ENCODE measurements at regions of chr4 and their contacts with region 1.

Region 1: GRCh38 chr4:85474818-85475630 is at the start of gene ARHGAP24:
- DNase-seq: peak; percentile 79
- ATAC-seq: peak; percentile 89
- H3K4me3 Mint-ChIP-seq: peak within 1 kb of the TSS; percentile 99
- H3K27ac Mint-ChIP-seq: peak within 1 kb of the TSS; percentile 99
- H3K4me1 Mint-ChIP-seq: peaks cover 52% of the 10 kb centered on the region
- H3K27me3 Mint-ChIP-seq: no peaks in the 10 kb centered on the region
- CTCF ChIP-seq: no peak
- total RNA-seq, gene ARHGAP24: 155 and 231 TPM in 2 replicates

Region 2: GRCh38 chr4:85391589-85392410 is 83.2 kb before region 1 on chr4:
- CTCF ChIA-PET with region 1: no interaction called
- POLR2A ChIA-PET with region 1: interaction called, 19 read pairs
- intact Hi-C with region 1: loop called (anchors 2 kb)
- DNase-seq: no peak
- ATAC-seq: peak; percentile 63
- H3K4me3 Mint-ChIP-seq: peak overlapping the region; percentile 61
- H3K27ac Mint-ChIP-seq: peak overlapping the region; percentile 84
- H3K4me1 Mint-ChIP-seq: peaks cover 35% of the 10 kb centered on the region
- H3K27me3 Mint-ChIP-seq: no peaks in the 10 kb centered on the region
- CTCF ChIP-seq: no peak

Region 3: GRCh38 chr4:85489273-85490265 is 14.5 kb after region 1 on chr4:
- CTCF ChIA-PET with region 1: interaction called, 6 read pairs
- POLR2A ChIA-PET with region 1: interaction called, 15 read pairs
- intact Hi-C with region 1: loop called (anchors 1 kb)
- DNase-seq: no peak
- ATAC-seq: no peak
- H3K4me3 Mint-ChIP-seq: no peak overlapping the region
- H3K27ac Mint-ChIP-seq: peak overlapping the region; percentile 13
- H3K4me1 Mint-ChIP-seq: peaks cover 55% of the 10 kb centered on the region
- H3K27me3 Mint-ChIP-seq: no peaks in the 10 kb centered on the region
- CTCF ChIP-seq: no peak

Region 4: DNA sequence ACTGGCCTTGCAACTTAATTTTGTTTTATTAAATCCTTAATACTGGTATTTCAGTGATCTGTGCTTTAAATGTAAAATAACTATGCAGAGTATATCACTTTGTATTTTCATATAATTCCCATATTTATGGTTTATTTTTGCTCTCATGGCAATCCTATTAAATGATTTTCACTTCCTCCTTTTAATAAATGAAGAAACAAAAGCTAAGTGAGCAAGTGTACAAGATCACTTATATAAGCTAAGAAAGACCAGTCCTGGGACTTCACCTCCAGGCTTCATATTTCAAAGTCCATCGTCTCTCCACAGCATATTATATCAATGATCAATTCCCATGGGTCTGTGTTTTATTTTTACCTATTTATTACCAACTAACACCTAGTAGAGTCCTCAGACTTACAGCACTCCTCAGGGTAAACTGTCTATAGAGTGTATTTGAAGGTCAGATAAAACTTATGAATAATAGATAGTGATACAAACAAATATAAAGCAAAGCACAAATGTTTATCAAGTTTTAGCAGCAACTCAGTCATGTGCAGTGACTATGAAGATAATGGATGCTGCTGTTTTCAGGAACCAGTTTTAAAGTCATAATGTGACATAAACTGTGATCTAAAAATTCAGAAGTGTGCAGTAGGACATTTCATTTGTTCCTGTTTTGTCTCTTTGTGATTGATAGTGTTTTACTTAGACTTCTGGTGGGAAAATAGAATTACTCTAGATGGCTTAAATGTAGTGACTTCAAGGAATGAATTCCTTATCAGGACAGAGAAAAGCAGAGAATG is 56.7 kb after region 1 on chr4:
- CTCF ChIA-PET with region 1: interaction called, 3 read pairs
- POLR2A ChIA-PET with region 1: interaction called, 4 read pairs
- intact Hi-C with region 1: loop called (anchors 2 kb)
- DNase-seq: no peak
- ATAC-seq: peak; percentile 52
- H3K4me3 Mint-ChIP-seq: peak overlapping the region; percentile 5
- H3K27ac Mint-ChIP-seq: peak overlapping the region; percentile 3
- H3K4me1 Mint-ChIP-seq: peaks cover 49% of the 10 kb centered on the region
- H3K27me3 Mint-ChIP-seq: no peaks in the 10 kb centered on the region
- CTCF ChIP-seq: no peak

Region 5: DNA sequence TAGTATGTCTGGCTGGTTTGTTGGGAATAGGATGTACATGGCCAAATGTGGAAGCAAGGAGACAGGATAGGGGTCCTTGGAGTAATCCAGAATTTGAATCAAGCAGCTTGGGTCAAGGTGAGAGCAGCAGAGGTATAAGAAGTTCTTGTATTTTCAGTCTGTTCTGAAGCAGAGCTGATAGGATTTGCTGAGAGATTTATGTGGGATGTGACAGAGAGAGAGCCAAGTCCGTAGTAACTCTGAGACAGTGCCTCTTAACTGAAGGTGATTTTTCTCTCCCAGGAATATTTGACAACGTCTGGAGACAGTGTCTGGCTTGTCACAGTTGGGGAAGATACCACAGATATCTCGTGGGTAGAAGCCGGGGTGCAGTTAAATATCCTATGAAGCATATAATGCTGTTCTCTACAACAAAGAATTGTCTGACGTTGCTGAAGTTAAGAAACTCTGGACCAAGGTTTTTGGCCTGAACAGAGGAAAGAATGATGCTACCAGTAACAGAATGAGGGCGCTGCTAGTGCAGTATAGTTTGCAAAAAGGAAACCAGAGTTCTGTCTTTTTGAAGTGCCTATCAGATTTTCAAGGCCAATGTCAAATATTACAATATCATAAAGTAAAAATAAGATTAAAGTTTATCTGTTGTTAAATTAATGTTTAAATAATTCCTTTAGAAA is 183.9 kb after region 1 on chr4:
- CTCF ChIA-PET with region 1: interaction called, 4 read pairs
- POLR2A ChIA-PET with region 1: interaction called, 5 read pairs
- intact Hi-C with region 1: loop called (anchors 1 kb)
- DNase-seq: no peak
- ATAC-seq: no peak
- H3K4me3 Mint-ChIP-seq: peak overlapping the region; percentile 5
- H3K27ac Mint-ChIP-seq: peak overlapping the region; percentile 89
- H3K4me1 Mint-ChIP-seq: peaks cover 52% of the 10 kb centered on the region
- H3K27me3 Mint-ChIP-seq: no peaks in the 10 kb centered on the region
- CTCF ChIP-seq: no peak

Region 6: GRCh38 chr4:85761803-85762528 is 286.9 kb after region 1 on chr4:
- CTCF ChIA-PET with region 1: no interaction called
- POLR2A ChIA-PET with region 1: no interaction called
- intact Hi-C with region 1: no loop called
- DNase-seq: no peak
- ATAC-seq: no peak
- H3K4me3 Mint-ChIP-seq: no peak overlapping the region
- H3K27ac Mint-ChIP-seq: no peak overlapping the region
- H3K4me1 Mint-ChIP-seq: peaks cover 16% of the 10 kb centered on the region
- H3K27me3 Mint-ChIP-seq: no peaks in the 10 kb centered on the region
- CTCF ChIP-seq: no peak